SK-N-SH (cell line): ENCODE measurements at regions of chr7 and their contacts with region 1.

Region 1: GRCh38 chr7:41696314-41696916 is 6.5 kb downstream of the INHBA start:
- DNase-seq: peak; percentile 79
- H3K4me3 ChIP-seq: peak overlapping the region; percentile 58 to 90
- H3K27ac ChIP-seq: peak overlapping the region; percentile 54 to 92; a peak in 3 of 4 replicates
- H3K4me1 ChIP-seq: peaks cover 14 to 28% of the 10 kb centered on the region in 2 experiments; a peak in 3 of 4 replicates
- H3K27me3 ChIP-seq: no peaks in the 10 kb centered on the region
- CTCF ChIP-seq: peak; percentile 97
- EP300 ChIP-seq: peak in 1 of 2 experiments; percentile 10; a peak in 1 of 4 replicates
- RAD21 ChIP-seq: peak; percentile 86

Region 2: DNA sequence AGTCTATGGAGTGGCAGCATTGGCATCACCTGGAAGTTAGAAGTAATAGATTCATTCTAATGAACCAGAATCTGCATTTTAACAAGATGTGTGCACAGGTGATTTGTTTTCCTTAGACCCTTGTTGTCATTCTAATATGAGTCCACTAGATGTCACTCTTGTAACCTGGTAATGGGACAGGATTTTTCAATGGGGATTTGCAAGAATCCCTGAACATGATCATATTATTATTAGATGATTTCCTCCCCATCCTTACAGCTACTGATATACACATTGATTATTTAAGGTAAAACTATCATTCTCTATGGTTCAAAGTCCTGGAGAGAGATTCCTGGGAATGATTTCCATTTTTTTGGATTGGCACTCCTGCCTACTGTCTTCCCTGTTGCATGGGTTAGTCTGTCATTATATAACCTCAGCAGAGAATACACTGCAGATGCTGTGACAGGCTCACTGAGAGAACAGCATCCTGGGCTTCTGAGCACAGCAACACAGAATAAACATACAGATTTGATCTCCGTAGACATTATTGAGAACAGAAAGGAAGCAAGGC is 1366.7 kb before region 1 on chr7:
- CTCF ChIA-PET with region 1: interaction called, 96 read pairs
- POLR2A ChIA-PET with region 1: no interaction called
- DNase-seq: peak; percentile 73
- H3K4me3 ChIP-seq: no peak overlapping the region
- H3K27ac ChIP-seq: peak overlapping the region; percentile 83 to 96
- H3K4me1 ChIP-seq: peaks cover 12 to 17% of the 10 kb centered on the region in 2 experiments; a peak in 3 of 4 replicates
- H3K27me3 ChIP-seq: no peaks in the 10 kb centered on the region
- CTCF ChIP-seq: peak; percentile 95
- EP300 ChIP-seq: peak; percentile 52 to 53; a peak in 2 of 4 replicates
- RAD21 ChIP-seq: peak; percentile 99

Region 3: DNA sequence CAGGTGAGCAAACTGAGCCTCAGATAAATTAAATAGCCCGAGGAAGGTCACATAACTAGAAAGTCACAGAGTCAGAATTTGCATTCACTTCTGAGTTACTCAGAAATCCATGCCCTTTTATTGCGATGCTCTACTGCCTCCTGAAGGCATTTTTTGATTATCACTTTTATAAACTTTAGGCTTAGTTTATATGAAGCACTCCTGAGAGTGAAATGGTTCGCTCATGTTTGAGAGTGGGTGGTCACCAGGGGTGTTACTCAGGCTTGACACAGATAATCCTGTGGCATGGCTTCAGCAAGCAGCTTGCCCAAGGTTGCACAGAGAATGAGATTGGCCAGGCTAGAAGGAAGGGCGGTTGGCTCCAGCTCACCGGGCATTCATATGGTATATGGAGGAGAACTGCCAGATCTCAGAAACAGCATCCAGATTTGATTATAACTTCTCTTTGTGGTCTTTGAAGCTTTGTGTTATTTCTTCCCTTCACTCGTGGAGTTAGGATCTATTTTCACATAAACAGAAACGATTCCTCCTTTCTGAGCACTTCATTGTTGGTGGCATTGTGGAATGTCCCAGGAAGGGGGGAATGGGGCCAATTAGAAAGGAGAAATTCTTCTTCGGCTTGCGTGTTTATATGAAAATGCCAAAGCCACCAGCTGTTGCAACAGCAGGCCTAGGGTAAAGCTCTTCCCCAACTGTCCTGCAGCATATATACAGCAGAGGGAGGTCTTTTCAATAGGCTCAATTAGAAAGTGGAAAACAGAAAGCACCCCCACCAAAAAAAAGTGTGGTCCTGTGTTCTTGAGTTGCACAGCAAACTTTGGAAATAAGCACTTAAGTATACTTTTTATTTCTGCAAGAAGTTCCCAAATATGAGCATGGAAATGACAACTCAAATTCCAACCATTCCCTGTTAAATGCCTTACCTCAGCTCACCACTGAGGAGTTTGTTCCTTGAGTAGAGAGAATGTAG is 932.8 kb before region 1 on chr7:
- CTCF ChIA-PET with region 1: interaction called, 10 read pairs
- POLR2A ChIA-PET with region 1: no interaction called
- DNase-seq: peak; percentile 8
- H3K4me3 ChIP-seq: no peak overlapping the region
- H3K27ac ChIP-seq: peak overlapping the region; percentile 39 to 86
- H3K4me1 ChIP-seq: peaks cover 11 to 14% of the 10 kb centered on the region in 2 experiments; a peak in 3 of 4 replicates
- H3K27me3 ChIP-seq: no peaks in the 10 kb centered on the region
- CTCF ChIP-seq: peak; percentile 44
- EP300 ChIP-seq: no peak; a peak in 2 of 4 replicates
- RAD21 ChIP-seq: peak; percentile 75

Region 4: DNA sequence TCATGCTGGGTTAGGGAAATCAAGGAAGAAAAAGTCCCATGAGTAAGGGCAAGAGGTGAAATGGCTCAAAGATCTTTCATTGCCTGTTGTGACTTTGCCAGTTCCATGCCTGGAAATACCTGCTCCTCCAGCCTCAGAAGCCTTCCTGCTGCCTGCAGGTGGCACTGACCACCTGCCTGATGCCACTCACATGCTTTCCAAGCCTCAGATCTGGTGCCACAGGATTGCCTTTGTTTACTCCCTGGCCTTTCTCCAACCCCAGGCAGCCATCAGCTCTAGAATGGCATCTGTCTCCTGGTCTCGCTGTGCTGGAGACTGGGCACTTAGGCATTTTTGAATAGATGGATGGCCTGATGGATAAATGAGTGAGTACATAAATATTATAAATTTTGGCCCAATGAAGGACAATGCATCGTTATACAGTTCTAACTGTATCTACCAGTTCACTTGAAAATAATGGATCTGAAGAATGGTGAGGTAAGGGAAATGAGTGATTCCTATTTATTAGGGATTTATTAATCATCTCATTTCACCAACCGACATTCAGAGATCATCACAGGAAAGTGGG is 650.8 kb before region 1 on chr7:
- CTCF ChIA-PET with region 1: interaction called, 18 read pairs
- POLR2A ChIA-PET with region 1: no interaction called
- DNase-seq: no peak
- H3K4me3 ChIP-seq: no peak overlapping the region
- H3K27ac ChIP-seq: peak overlapping the region in 1 of 2 experiments; percentile 37; a peak in 1 of 4 replicates
- H3K4me1 ChIP-seq: peaks cover 10 to 19% of the 10 kb centered on the region in 2 experiments; a peak in 3 of 4 replicates
- H3K27me3 ChIP-seq: no peaks in the 10 kb centered on the region
- CTCF ChIP-seq: peak; percentile 32
- EP300 ChIP-seq: no peak
- RAD21 ChIP-seq: peak; percentile 67

Region 5: GRCh38 chr7:41205600-41205999 is 490.8 kb before region 1 on chr7:
- CTCF ChIA-PET with region 1: no interaction called
- POLR2A ChIA-PET with region 1: no interaction called
- DNase-seq: no peak
- H3K4me3 ChIP-seq: no peak overlapping the region
- H3K27ac ChIP-seq: no peak overlapping the region
- H3K4me1 ChIP-seq: no peaks in the 10 kb centered on the region
- H3K27me3 ChIP-seq: no peaks in the 10 kb centered on the region
- CTCF ChIP-seq: no peak
- EP300 ChIP-seq: no peak
- RAD21 ChIP-seq: no peak

Region 6: GRCh38 chr7:41437257-41438196 is 258.9 kb before region 1 on chr7:
- CTCF ChIA-PET with region 1: interaction called, 10 read pairs
- POLR2A ChIA-PET with region 1: no interaction called
- DNase-seq: no peak
- H3K4me3 ChIP-seq: no peak overlapping the region
- H3K27ac ChIP-seq: no peak overlapping the region
- H3K4me1 ChIP-seq: peaks cover 0 to 12% of the 10 kb centered on the region in 2 experiments; a peak in 2 of 4 replicates
- H3K27me3 ChIP-seq: no peaks in the 10 kb centered on the region
- CTCF ChIP-seq: no peak
- EP300 ChIP-seq: no peak
- RAD21 ChIP-seq: no peak

Region 7: DNA sequence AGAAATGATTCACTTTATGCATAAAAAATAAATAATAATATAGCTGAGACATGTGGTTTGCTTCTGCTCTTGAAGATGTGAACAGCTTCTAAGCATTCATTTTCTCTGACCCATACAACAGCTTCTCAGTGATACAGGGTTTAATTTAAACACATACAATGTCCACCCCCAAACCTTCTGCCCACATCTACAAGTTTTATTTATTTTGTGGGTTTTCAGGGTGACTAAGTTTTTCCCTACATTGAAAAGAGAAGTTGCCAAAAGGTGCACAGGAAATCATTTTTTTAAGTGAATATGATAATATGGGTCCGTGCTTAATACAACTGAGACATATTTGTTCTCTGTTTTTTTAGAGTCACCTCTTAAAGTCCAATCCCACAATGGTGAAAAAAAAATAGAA is 10.7 kb before region 1 on chr7:
- CTCF ChIA-PET with region 1: interaction called, 20 read pairs
- POLR2A ChIA-PET with region 1: no interaction called
- DNase-seq: no peak
- H3K4me3 ChIP-seq: no peak overlapping the region
- H3K27ac ChIP-seq: peak overlapping the region in 1 of 2 experiments; percentile 52; a peak in 2 of 4 replicates
- H3K4me1 ChIP-seq: peaks cover 0 to 7% of the 10 kb centered on the region in 2 experiments; a peak in 1 of 4 replicates
- H3K27me3 ChIP-seq: no peaks in the 10 kb centered on the region
- CTCF ChIP-seq: no peak
- EP300 ChIP-seq: no peak
- RAD21 ChIP-seq: no peak

Region 8: DNA sequence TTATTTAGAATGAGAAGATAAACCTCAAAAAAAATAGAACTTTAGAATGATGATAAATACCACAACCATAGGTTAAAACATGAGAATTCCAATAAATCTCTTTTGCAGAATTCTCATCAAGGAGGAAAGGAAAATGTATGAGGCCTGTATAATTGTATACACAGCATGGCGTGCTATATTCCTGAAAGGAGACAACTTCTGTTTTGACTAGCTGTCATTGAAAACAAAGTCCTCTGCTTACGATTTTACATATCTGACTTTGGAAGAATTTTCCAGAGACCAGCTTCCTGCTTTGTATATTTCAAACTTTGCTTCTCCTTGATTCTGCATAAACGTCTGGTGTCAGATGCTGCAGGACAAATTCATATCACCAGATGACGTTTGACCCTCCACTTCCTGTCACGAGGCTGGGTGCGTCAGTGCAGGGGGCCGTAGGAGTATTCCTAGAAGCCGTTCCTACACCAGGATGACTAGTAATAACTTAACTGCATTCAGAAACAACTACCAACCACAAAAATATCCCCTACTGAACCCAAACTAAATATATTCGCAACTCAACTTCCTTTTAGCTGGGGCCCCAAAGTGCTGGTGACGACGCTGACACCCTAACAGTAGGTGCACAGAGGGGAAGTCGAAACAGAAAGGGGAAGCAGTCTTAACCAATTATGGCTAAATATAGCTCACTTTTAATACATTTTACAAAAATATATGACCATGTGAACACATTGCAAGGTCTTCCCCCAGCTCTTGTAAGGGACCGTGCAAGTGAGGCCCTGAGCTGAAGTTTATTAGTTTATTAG is 185.1 kb after region 1 on chr7:
- CTCF ChIA-PET with region 1: no interaction called
- POLR2A ChIA-PET with region 1: no interaction called
- DNase-seq: no peak
- H3K4me3 ChIP-seq: no peak overlapping the region
- H3K27ac ChIP-seq: peak overlapping the region; percentile 90 to 92; a peak in 3 of 4 replicates
- H3K4me1 ChIP-seq: peaks cover 16 to 55% of the 10 kb centered on the region in 2 experiments
- H3K27me3 ChIP-seq: no peaks in the 10 kb centered on the region
- CTCF ChIP-seq: no peak
- EP300 ChIP-seq: no peak
- RAD21 ChIP-seq: no peak